Psoas muscle (tissue), 8 donors: ENCODE measurements at regions of chr3 and their contacts with region 1.

Region 1: DNA sequence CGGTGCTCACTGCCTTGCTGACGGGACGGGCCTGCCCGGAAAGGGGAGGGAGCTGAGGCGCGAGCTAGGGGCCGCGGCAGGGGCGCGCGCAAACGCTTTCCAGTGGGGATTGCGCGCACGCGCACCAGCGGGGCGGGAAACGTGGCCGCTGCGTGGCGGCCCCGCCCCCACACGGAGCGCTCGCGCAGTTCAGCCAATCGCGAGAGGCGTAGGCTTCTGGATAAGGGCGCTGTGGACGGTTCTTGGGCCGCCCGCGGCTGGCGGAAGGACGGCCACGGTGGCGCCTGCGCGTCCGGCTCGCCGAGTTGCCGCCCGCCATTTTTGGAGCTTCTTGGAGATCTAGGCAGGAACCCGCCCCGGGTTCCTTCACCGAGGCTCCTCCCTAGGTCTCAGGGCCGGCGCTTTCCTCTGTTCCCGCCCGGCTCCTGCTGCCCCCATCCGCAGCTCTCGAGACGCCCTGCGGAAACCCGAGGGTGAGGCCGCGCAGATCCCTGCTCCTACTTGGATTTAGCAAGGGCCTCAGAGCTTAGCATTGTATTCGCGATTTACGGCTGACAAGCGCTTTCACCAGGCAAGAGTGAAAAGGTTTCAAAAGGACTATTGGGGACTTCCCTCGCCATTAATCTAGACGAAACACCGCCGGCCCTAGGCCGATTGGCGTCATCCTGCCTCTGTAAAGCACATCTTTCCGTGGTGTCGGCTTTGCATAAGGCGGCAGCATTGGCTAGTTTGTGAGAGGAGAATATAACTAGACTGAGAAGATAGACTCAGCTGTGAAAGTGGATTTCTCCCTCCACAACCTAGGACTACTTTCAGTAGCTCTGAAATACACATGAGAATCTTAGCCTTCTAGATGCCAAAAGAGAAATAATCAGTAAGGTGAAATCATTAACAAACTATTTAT is 496 bp upstream of the STAG1 start:
- DNase-seq: peak; percentile 99
- ATAC-seq: peak; percentile 93 to 95 (median 94)
- H3K4me3 ChIP-seq: peak overlapping the region; percentile 82
- H3K27ac ChIP-seq: peak overlapping the region; percentile 98
- H3K4me1 ChIP-seq: peaks cover 31% of the 10 kb centered on the region
- H3K27me3 ChIP-seq: no peaks in the 10 kb centered on the region
- CTCF ChIP-seq: no peak

Region 2: DNA sequence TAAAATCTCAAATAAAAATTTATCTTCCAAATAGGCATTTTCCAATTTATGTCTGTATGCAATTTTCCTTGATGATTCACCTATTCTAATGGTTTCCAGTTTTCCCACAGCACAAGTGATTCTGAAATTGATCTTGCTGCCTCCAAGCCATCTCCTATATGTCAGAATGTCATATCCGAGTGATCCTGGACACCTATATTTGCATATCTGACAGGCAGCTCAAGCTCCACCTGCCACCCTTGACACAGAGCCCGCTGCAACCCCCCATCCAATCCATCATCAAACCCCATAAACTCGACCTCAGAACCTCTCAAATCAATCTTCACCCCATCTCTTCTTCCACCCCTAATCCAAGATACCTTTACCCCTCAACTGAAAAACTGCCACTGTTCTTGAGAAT is 1378.1 kb before region 1 on chr3:
- intact Hi-C with region 1: no loop called
- DNase-seq: no peak
- ATAC-seq: no peak
- H3K4me3 ChIP-seq: no peak overlapping the region
- H3K27ac ChIP-seq: no peak overlapping the region
- H3K4me1 ChIP-seq: no peaks in the 10 kb centered on the region
- H3K27me3 ChIP-seq: no peaks in the 10 kb centered on the region
- CTCF ChIP-seq: no peak

Region 3: DNA sequence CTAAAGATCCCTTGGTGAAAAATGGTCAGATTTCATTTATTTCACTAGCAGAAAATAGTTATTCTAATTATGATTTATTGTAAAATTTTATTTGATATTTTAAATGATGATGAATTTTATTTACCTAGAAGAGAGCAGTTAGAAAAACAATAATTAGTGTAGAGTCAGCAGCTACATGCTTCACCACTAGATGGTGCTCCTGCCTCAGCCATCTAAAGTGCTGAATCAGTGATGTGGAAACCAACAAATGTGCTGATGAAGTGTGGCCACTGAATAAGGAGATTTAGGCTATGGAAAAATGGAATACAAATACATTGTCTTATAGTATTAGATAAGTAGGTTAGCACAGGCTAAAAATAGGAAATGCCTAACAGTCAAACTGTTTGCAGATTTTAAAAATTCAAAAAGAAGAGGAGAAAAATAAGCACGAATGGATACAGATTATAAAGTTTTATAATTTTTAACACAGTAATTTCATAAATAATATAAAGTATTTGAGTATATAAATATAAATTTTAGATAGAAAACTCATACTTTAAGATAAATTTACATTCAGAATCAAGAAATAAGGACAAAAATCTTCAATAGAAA is 677.4 kb before region 1 on chr3:
- intact Hi-C with region 1: loop called (anchors 2 to 5 kb)
- DNase-seq: peak; percentile 57 to 69
- ATAC-seq: peak; percentile 84 to 88 (median 85)
- H3K4me3 ChIP-seq: peak overlapping the region; percentile 13
- H3K27ac ChIP-seq: peak overlapping the region; percentile 88
- H3K4me1 ChIP-seq: peaks cover 45% of the 10 kb centered on the region
- H3K27me3 ChIP-seq: no peaks in the 10 kb centered on the region
- CTCF ChIP-seq: peak; percentile 95

Region 4: GRCh38 chr3:136250226-136250902 is 502.3 kb before region 1 on chr3 and contains the start of gene PCCB:
- intact Hi-C with region 1: loop called in 1 of 2 experiments (anchors 10 kb)
- DNase-seq: peak; percentile 94 to 97
- ATAC-seq: peak; percentile 97 to 98 (median 98)
- H3K4me3 ChIP-seq: peak within 1 kb of the TSS; percentile 73
- H3K27ac ChIP-seq: peak within 1 kb of the TSS; percentile 89
- H3K4me1 ChIP-seq: peaks cover 13% of the 10 kb centered on the region
- H3K27me3 ChIP-seq: no peaks in the 10 kb centered on the region
- CTCF ChIP-seq: peak; percentile 68
- total RNA-seq, gene PCCB: 36.4 to 60.4 (median 52.5) TPM

Region 5: DNA sequence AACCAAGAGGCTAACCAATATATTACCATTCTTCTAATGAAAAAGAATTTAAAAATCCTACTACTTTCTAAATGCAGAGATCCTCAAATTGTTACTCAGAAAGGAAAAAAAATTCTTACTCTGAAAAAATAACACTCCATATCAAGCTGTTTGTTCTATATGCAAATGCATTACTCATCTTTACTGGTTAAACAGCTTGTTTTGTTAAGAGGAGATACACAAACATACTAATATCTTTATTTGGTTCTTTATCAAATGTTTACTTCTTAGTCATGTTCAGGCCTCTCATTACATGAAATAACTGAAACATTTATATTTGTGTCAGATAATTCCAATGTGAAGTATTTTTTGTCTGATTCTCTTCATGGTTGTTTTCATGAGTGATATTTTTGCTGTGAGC is 355.8 kb before region 1 on chr3:
- intact Hi-C with region 1: loop called in 1 of 2 experiments (anchors 10 kb)
- DNase-seq: no peak
- ATAC-seq: no peak
- H3K4me3 ChIP-seq: no peak overlapping the region
- H3K27ac ChIP-seq: no peak overlapping the region
- H3K4me1 ChIP-seq: no peaks in the 10 kb centered on the region
- H3K27me3 ChIP-seq: no peaks in the 10 kb centered on the region
- CTCF ChIP-seq: no peak

Region 6: DNA sequence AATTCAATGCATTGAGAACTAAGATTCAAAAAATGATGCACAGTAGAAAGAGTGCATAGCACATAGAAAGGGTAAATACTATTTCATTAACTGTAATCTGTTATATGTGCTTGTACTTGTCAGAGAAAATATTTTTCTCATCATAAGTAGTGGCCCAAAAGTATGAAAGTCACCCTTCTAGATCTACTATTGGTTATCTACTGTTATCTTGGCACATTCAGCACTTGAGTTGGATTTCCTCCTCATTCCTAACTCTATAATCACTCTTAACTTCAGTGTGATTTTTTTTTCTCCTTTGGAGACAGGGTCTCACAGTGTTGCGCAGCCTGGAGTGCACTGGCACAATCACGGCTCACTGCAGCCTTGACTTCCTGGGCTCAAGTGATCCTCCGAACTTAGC is 308.1 kb before region 1 on chr3:
- intact Hi-C with region 1: no loop called
- DNase-seq: no peak
- ATAC-seq: no peak
- H3K4me3 ChIP-seq: no peak overlapping the region
- H3K27ac ChIP-seq: no peak overlapping the region
- H3K4me1 ChIP-seq: no peaks in the 10 kb centered on the region
- H3K27me3 ChIP-seq: no peaks in the 10 kb centered on the region
- CTCF ChIP-seq: no peak

Region 7: DNA sequence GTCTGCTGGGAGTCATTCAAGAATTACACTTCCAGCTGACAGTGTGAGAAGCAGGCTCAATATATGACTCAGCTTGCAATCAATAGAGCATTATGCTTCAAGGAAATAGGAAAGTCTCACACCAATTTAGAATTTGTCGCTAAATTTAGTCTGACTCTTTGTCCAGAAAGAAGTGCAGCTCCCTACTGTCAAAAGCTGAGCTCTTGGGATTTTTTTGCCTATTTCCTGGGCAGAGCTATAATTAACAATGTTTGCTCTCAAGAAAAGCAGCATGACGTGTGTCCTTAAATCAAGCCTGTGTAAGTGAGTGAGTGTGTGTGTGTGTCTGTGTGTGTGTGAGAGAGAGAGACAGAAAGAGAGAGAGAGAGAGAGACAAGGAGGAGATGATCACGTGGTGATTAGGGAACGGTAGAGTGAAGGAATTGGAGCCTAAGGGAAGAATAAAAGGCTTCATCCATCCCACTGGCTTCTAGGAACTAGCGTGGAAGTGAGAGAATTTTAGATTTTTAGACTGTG is 49.9 kb after region 1 on chr3:
- intact Hi-C with region 1: loop called in 1 of 2 experiments (anchors 5 kb)
- DNase-seq: no peak
- ATAC-seq: peak in 3 of 4 donors; percentile 68 to 78 (median 70)
- H3K4me3 ChIP-seq: no peak overlapping the region
- H3K27ac ChIP-seq: peak overlapping the region; percentile 48
- H3K4me1 ChIP-seq: peaks cover 10% of the 10 kb centered on the region
- H3K27me3 ChIP-seq: no peaks in the 10 kb centered on the region
- CTCF ChIP-seq: no peak

Region 8: DNA sequence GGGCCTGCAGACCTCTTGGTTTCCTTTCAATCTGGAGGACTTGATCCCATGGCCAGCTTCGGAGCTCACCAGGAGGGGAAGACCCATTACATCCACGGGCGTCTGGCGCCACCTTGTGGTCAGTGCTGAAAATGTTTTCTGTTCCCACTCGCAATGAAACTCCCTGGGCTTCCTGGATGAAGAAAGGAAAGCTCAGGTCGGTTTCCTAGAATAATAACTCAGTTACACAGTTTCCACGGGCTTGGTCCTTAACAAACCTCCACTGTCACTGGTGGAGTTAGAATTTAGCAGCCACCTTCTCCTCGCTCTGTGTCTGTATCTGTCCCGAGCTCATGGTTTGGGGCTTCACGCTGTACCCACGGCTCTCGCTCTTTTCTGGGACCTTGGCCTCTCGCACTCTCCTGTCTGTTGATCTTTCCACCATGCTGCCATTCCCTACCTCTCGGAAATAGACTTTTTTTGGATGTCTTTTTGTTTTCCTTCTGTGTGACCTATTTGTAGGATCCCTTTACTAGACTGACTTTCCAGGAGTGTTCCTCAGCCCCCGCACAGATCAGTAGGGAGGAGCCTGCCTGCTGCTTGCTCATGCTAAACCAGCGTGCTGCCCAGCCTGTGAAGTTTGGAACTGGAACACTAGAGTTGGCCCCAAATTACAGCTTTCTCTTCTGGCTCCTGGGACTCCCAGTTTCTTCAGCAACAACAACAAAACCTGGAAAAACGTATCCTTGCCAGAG is 261.4 kb after region 1 on chr3:
- intact Hi-C with region 1: loop called (anchors 1 to 2 kb)
- DNase-seq: peak; percentile 86 to 93
- ATAC-seq: peak; percentile 92 to 99 (median 96)
- H3K4me3 ChIP-seq: peak overlapping the region; percentile 57
- H3K27ac ChIP-seq: peak overlapping the region; percentile 30
- H3K4me1 ChIP-seq: no peaks in the 10 kb centered on the region
- H3K27me3 ChIP-seq: no peaks in the 10 kb centered on the region
- CTCF ChIP-seq: peak; percentile 92